A673 (cell line): ENCODE measurements at regions of chr5 and their contacts with region 1.

Region 1: DNA sequence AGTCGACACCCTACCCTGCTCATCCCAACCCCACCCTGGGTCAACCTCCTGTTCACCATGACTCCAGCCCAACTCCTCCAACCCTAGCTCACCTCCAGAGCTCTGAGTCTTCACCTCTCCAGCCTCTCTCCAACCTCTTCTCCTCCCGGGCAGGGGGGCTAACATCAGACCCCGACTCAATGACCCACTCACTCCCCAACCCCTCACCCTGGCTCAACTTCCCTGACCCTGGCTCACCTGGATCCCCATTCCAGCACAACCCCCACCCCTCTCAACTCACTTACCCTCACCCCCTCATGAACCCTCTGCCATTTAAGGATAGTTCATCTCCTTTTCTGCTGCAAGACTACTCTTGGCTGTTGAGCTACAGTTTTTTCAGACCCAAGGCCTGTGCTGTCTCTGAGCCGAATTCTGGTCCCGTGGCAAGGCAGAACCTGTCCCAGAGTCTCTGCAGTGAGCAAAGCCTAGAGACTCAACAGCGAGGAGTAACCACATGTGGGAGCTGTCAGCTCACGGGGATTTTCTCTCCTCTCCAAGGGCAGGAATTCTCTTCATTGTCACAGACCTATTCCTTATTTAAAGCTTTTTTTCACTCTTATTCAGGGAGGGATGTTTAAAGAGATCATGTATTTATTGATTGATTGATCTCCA is 29.8 kb downstream of the ANKRD33B start:
- DNase-seq: no peak
- H3K4me3 ChIP-seq: no peak overlapping the region
- H3K27ac ChIP-seq: no peak overlapping the region
- H3K4me1 ChIP-seq: no peaks in the 10 kb centered on the region
- H3K27me3 ChIP-seq: no peaks in the 10 kb centered on the region
- CTCF ChIP-seq: no peak

Region 2: GRCh38 chr5:10467240-10468198 is 126.1 kb before region 1 on chr5:
- CTCF ChIA-PET with region 1: no interaction called
- POLR2A ChIA-PET with region 1: no interaction called
- intact Hi-C with region 1: no loop called
- DNase-seq: no peak
- H3K4me3 ChIP-seq: no peak overlapping the region
- H3K27ac ChIP-seq: no peak overlapping the region
- H3K4me1 ChIP-seq: no peaks in the 10 kb centered on the region
- H3K27me3 ChIP-seq: no peaks in the 10 kb centered on the region
- CTCF ChIP-seq: no peak

Region 3: DNA sequence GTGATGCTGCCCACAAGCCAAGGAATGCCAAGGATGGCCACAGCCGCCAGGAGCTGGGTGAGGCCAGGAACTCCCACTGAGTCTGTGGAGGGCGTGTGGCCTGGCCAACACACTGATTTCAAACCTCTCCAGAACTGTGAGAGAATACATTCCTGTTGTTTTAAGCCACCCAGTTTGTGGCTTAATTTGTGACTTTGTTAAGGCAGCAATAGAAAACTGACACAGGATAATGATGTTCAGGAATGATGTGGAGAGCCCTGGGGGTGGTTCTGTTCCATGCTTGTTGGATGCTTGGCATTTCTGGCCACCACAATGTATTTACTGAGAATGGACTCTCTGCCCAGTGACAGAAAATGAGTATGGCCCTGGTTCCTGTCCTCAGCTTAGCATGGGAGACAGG is 84.6 kb after region 1 on chr5:
- CTCF ChIA-PET with region 1: no interaction called
- POLR2A ChIA-PET with region 1: interaction called, 36 read pairs
- intact Hi-C with region 1: no loop called
- DNase-seq: no peak
- H3K4me3 ChIP-seq: no peak overlapping the region
- H3K27ac ChIP-seq: no peak overlapping the region
- H3K4me1 ChIP-seq: no peaks in the 10 kb centered on the region
- H3K27me3 ChIP-seq: no peaks in the 10 kb centered on the region
- CTCF ChIP-seq: no peak